Activated CD4-positive, alpha-beta T cell treated with anti-CD3 and anti-CD28 coated beads, Interleukin-2, amount 10 ng/mL, durations not matched to agents 7 days and 5 days (primary cell): ENCODE measurements at regions of chr5 and their contacts with region 1.

Region 1: GRCh38 chr5:71586941-71587765 is at the start of gene MCCC2:
- DNase-seq: peak; percentile 98
- H3K4me3 Mint-ChIP-seq: peak within 1 kb of the TSS; percentile 94
- H3K27ac Mint-ChIP-seq: peak within 1 kb of the TSS; percentile 99
- H3K4me1 Mint-ChIP-seq: peaks cover 33% of the 10 kb centered on the region
- H3K27me3 Mint-ChIP-seq: no peaks in the 10 kb centered on the region
- total RNA-seq, gene MCCC2: 40.0 to 40.1 TPM

Region 2: GRCh38 chr5:71601222-71602041 is 14.3 kb after region 1 on chr5:
- CTCF ChIA-PET with region 1: interaction called, 47 read pairs
- POLR2A ChIA-PET with region 1: interaction called, 4 read pairs
- DNase-seq: peak; percentile 74
- H3K4me3 Mint-ChIP-seq: no peak overlapping the region
- H3K27ac Mint-ChIP-seq: peak overlapping the region; percentile 83
- H3K4me1 Mint-ChIP-seq: peaks cover 30% of the 10 kb centered on the region
- H3K27me3 Mint-ChIP-seq: no peaks in the 10 kb centered on the region